CD8-positive, alpha-beta T cell (primary cell): ENCODE measurements at regions of chr15 and their contacts with region 1.

Region 1: DNA sequence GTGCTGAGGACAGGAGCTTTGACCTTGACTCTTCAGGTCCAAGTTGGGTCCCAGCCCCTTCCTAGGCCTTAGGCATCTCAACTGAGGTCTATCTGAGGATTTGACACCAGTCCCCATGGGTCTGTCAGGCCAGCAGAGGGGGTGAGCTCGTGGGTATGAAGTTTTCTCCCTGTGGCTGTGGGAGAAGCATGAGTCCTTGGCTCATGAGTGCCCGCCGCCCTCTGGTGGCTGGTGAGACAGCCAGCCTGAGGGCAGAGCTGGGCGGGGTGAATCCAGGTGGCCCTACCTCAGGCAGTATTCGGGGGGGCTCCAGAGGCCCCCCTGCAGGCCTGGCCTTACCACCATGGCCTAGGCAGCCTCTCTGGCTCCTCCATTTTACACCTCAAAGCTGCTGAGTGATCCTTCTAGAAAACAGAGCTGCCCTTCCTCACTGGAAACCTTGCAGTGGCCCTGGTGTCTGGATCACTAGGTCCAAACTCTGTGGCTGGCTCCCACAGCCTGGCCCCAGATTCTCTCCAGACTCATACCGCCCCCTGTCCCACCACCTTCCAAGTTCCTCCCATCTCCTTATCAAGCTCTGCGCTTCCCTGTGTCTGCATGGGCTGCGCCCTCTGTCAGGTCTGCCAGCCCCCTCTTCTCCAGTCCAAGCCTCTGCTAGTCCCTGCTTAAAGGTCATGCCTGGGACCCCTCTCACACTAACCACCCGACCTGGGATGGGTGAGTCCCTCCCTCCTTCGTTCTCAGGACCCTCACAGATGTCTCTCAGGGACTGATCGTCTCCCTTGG is 16.1 kb downstream of the SH2D7 start:
- DNase-seq: peak; percentile 69 to 92 (median 85)
- ATAC-seq: peak; percentile 79
- H3K4me3 ChIP-seq: no peak overlapping the region
- H3K4me3 Mint-ChIP-seq: no peak overlapping the region
- H3K27ac ChIP-seq: no peak overlapping the region
- H3K27ac Mint-ChIP-seq: no peak overlapping the region
- H3K4me1 ChIP-seq: peaks cover 34% of the 10 kb centered on the region
- H3K4me1 Mint-ChIP-seq: peaks cover 35% of the 10 kb centered on the region
- H3K27me3 ChIP-seq: no peaks in the 10 kb centered on the region
- H3K27me3 Mint-ChIP-seq: no peaks in the 10 kb centered on the region
- CTCF ChIP-seq: peak; percentile 80

Region 2: GRCh38 chr15:78000091-78000926 is 108.2 kb before region 1 on chr15:
- CTCF ChIA-PET with region 1: interaction called, 93 read pairs
- POLR2A ChIA-PET with region 1: interaction called, 3 read pairs
- intact Hi-C with region 1: loop called (anchors 1 kb)
- DNase-seq: peak; percentile 56 to 85 (median 79)
- ATAC-seq: peak; percentile 99
- H3K4me3 ChIP-seq: no peak overlapping the region
- H3K4me3 Mint-ChIP-seq: no peak overlapping the region
- H3K27ac ChIP-seq: no peak overlapping the region
- H3K27ac Mint-ChIP-seq: peak overlapping the region; percentile 64
- H3K4me1 ChIP-seq: no peaks in the 10 kb centered on the region
- H3K4me1 Mint-ChIP-seq: peaks cover 6% of the 10 kb centered on the region
- H3K27me3 ChIP-seq: no peaks in the 10 kb centered on the region
- H3K27me3 Mint-ChIP-seq: no peaks in the 10 kb centered on the region
- CTCF ChIP-seq: peak; percentile 52

Region 3: GRCh38 chr15:78044407-78045155 is 63.9 kb before region 1 on chr15:
- CTCF ChIA-PET with region 1: interaction called, 18 read pairs
- POLR2A ChIA-PET with region 1: no interaction called
- intact Hi-C with region 1: loop called in 1 of 2 experiments (anchors 2 kb)
- DNase-seq: peak in 3 of 9 experiments; percentile 45 to 85 (median 76)
- ATAC-seq: peak; percentile 50
- H3K4me3 ChIP-seq: no peak overlapping the region
- H3K4me3 Mint-ChIP-seq: peak overlapping the region; percentile 53
- H3K27ac ChIP-seq: peak overlapping the region in 1 of 2 experiments; percentile 92
- H3K27ac Mint-ChIP-seq: peak overlapping the region; percentile 95
- H3K4me1 ChIP-seq: peaks cover 84% of the 10 kb centered on the region
- H3K4me1 Mint-ChIP-seq: peaks cover 92% of the 10 kb centered on the region
- H3K27me3 ChIP-seq: no peaks in the 10 kb centered on the region
- H3K27me3 Mint-ChIP-seq: no peaks in the 10 kb centered on the region
- CTCF ChIP-seq: no peak

Region 4: DNA sequence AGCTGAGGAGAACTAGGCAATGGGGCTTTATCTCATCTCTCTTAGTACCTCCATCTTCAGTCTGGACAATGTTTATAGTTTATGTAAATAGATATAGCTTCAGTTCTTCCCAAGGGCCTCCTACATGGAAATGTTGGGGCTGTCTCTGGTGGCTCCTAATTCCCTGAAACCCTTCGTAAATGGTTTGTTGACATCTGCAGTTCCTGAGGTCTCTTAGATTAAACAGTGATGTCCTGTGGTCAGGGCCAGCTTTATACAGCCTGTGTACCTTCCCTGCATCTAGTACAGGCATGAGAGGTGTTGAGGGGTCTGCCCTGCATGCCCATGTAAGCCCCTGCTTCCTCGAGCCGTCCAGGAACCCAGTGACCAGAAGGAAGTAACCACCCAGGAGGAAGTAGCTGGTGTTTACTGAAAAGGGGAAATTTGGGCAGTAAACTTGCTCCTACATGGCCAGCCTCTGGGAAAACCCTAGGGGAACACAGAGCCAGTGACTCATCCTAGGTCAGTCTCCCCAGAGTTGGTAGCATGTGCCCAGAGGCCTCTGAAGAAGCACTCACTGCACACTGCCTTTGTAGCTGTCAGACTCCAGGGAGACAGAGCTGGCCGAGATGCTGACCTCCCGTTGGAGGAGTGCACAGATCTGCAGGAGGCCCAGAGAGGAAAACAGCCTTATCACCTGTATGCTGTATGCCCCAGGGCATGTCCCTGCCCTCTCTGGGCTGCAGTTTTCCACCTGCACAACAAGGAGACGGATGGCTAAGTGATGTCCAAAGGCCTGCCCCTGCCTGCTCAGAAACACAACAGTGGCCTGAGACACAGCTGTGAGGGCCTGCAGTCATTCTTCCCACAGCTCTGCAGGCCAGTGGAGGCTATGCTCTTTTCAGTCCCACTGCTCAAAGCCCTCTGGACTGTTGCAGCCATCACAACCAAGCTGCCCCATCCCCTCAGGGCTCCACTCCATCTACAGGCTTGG is 26.1 kb before region 1 on chr15:
- CTCF ChIA-PET with region 1: interaction called, 29 read pairs
- POLR2A ChIA-PET with region 1: no interaction called
- intact Hi-C with region 1: loop called in 1 of 2 experiments (anchors 1 kb)
- DNase-seq: no peak
- ATAC-seq: no peak
- H3K4me3 ChIP-seq: no peak overlapping the region
- H3K4me3 Mint-ChIP-seq: no peak overlapping the region
- H3K27ac ChIP-seq: no peak overlapping the region
- H3K27ac Mint-ChIP-seq: no peak overlapping the region
- H3K4me1 ChIP-seq: peaks cover 14% of the 10 kb centered on the region
- H3K4me1 Mint-ChIP-seq: peaks cover 6% of the 10 kb centered on the region
- H3K27me3 ChIP-seq: no peaks in the 10 kb centered on the region
- H3K27me3 Mint-ChIP-seq: no peaks in the 10 kb centered on the region
- CTCF ChIP-seq: no peak

Region 5: DNA sequence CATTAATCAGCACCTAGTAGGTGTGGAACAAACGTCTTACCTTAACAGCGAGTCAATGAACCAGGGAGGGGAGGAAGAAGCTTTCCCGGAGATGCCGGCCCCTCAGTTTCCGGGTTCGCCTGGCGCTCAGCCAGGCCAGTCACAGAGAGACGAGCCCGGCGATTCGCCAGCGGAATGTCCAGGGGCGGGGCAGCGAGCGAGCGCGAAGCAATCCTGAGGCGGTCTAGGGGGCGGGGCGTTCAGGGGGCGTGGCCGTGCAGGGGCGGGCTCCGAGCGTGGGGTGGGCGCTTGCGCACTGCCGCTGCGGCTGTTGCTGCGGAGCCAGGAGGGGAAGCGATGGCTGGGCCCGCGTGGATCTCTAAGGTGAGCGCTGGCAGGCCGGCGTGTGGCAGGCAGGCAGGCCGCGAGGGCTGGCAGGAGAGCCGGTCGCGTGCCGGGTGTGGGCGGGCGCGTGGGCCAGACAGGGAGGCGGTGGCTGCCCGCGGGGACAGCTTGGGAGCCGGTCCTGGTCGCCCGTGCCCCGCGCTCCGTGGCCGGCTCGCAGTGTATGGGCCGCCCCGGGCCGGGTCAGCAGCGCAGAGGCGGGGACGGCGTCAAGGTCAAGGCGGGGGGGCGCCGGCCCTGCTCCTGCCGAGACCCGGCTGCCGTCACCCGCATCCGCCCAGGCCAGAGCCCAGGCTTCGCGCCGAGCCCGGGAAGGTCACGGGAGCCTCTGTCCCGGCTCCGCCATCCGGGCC is 40.7 kb after region 1 on chr15 and contains the start of gene IDH3A:
- CTCF ChIA-PET with region 1: interaction called, 4 read pairs
- POLR2A ChIA-PET with region 1: no interaction called
- intact Hi-C with region 1: loop called in 1 of 2 experiments (anchors 2 kb)
- DNase-seq: peak; percentile 99 to 100 (median 100)
- ATAC-seq: peak; percentile 97
- H3K4me3 ChIP-seq: peak within 1 kb of the TSS; percentile 72 to 81
- H3K4me3 Mint-ChIP-seq: peak within 1 kb of the TSS; percentile 91
- H3K27ac ChIP-seq: peak within 1 kb of the TSS; percentile 65 to 67
- H3K27ac Mint-ChIP-seq: peak within 1 kb of the TSS; percentile 91
- H3K4me1 ChIP-seq: peaks cover 18% of the 10 kb centered on the region
- H3K4me1 Mint-ChIP-seq: peaks cover 44% of the 10 kb centered on the region
- H3K27me3 ChIP-seq: no peaks in the 10 kb centered on the region
- H3K27me3 Mint-ChIP-seq: no peaks in the 10 kb centered on the region
- CTCF ChIP-seq: no peak
- total RNA-seq, gene IDH3A: 54.4 to 61.0 TPM

Region 6: GRCh38 chr15:78709263-78709882 is 600.9 kb after region 1 on chr15:
- CTCF ChIA-PET with region 1: no interaction called
- POLR2A ChIA-PET with region 1: no interaction called
- intact Hi-C with region 1: loop called in 1 of 2 experiments (anchors 2 kb)
- DNase-seq: peak; percentile 34 to 76 (median 63)
- ATAC-seq: peak; percentile 88
- H3K4me3 ChIP-seq: no peak overlapping the region
- H3K4me3 Mint-ChIP-seq: no peak overlapping the region
- H3K27ac ChIP-seq: no peak overlapping the region
- H3K27ac Mint-ChIP-seq: no peak overlapping the region
- H3K4me1 ChIP-seq: no peaks in the 10 kb centered on the region
- H3K4me1 Mint-ChIP-seq: peaks cover 8% of the 10 kb centered on the region
- H3K27me3 ChIP-seq: peaks cover 0 to 3% of the 10 kb centered on the region in 2 experiments
- H3K27me3 Mint-ChIP-seq: peaks cover 27% of the 10 kb centered on the region
- CTCF ChIP-seq: peak; percentile 76